ENCODE measurements at regions of chr18 and their contacts with region 1.

Region 1: DNA sequence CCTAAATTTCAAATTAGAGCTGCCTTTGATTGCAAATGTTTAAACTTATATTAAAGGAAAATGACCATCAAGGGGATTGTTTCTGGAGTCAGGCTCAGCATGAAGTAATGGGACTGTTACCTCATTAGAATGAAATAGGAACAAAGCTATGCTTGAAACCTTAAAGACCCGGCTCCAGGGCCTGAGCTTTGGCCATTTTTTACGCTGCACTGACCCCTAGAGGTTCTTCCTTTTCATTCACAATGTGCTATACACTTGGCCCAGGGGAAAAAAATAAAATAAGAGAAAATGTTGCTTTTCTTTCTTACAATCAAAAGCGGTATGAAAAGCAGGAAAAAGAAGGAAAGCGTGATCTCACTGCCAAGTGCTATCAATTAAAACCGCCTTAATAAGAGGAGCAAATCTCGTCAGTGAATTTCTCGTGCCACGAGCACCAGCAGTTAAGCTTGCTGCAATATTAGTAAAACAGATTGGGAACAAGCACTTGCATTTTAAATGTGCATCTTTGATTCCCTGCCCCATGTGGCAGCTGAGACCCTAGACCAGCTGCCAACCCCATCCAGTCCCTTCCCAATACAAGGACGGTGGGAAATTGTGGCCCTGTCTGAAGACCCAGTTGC is 96.6 kb downstream of the MBD2 start:
- DNase-seq: peak; percentile 40
- CTCF ChIP-seq: peak; percentile 50

Region 2: GRCh38 chr18:53567929-53568574 is 559.8 kb before region 1 on chr18:
- CTCF ChIA-PET with region 1: interaction called, 23 read pairs
- POLR2A ChIA-PET with region 1: no interaction called
- DNase-seq: peak; percentile 41
- CTCF ChIP-seq: peak; percentile 58

Region 3: GRCh38 chr18:53909668-53910067 is 218.2 kb before region 1 on chr18:
- CTCF ChIA-PET with region 1: interaction called, 12 read pairs
- POLR2A ChIA-PET with region 1: no interaction called
- DNase-seq: no peak
- CTCF ChIP-seq: peak; percentile 28

Region 4: GRCh38 chr18:54052732-54053429 is 75.0 kb before region 1 on chr18:
- CTCF ChIA-PET with region 1: no interaction called
- POLR2A ChIA-PET with region 1: no interaction called
- DNase-seq: no peak
- CTCF ChIP-seq: no peak

Region 5: DNA sequence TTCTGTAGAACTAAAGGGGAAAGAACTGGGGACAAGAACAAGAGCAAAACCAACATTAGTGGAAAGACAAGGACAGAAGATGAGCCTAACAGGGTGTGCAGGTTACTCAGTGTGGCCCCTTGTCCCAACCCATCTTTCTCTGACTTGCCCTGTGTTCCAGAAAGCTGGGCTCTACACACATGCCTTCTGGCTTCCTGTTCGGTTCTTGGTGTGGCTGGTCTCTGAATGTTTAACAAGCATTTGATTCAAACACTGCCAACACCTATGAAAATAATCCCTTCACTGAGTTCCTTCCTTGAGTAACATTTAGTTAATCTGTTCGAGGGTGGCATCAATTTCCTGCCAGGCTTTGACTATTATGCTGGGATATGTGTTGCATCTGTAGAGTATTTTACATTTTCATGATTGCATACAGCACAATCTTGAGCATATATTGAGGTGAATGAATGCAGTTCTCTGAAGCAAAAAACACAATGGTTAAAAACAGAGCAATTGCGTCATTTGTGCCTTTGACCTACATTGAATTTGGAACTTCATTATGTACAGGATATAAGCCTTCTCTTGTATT is 13.3 kb after region 1 on chr18:
- CTCF ChIA-PET with region 1: interaction called, 17 read pairs
- POLR2A ChIA-PET with region 1: no interaction called
- DNase-seq: no peak
- CTCF ChIP-seq: no peak

Region 6: DNA sequence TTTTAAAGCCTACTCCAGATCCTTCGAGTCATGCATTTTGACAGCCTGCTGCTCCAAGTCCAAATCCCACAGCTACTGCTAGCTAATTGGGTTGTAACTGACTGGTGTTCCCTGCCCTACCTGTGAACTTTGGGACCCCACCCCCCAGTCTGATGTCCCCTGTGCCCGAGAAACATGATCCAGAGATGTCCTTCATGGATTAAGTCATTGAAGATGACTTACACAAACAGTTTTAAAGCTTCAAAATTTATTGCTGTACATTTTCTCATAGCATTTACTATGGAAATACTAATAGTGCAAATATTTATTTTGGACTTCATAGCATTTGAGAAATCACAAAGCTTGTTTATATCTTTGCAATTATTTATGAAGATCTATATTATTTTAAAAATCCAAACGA is 23.5 kb after region 1 on chr18:
- CTCF ChIA-PET with region 1: interaction called, 10 read pairs
- POLR2A ChIA-PET with region 1: no interaction called
- DNase-seq: no peak
- CTCF ChIP-seq: no peak

Measured in GM10248 (cell line).